CD8-positive, alpha-beta memory T cell (primary cell): ENCODE measurements at regions of chr12 and their contacts with region 1.

Region 1: DNA sequence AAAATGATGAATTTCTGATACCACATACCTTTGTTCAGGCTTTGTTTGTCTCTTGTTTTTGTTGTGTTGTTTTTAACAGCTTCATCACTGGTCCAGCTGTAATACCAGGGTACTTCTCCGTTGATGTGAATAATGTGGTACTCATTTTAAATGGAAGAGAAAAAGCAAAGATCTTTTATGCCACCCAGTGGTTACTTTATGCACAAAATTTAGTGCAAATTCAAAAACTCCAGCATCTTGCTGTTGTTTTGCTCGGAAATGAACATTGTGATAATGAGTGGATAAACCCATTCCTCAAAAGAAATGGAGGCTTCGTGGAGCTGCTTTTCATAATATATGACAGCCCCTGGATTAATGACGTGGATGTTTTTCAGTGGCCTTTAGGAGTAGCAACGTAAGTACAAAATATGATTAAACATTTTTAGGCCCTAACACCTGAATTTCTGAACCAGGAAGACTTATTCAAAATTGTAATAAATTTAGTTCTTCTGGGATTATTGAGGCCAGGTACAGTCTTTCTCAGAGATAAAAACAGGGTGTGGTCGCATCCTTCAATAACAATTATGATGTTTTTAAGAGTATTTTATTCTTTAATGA is 22.4 kb downstream of the RXYLT1 start:
- DNase-seq: peak in 2 of 5 donors; percentile 17 to 21
- H3K4me3 ChIP-seq: no peak overlapping the region
- H3K4me3 Mint-ChIP-seq: no peak overlapping the region
- H3K27ac ChIP-seq: no peak overlapping the region
- H3K27ac Mint-ChIP-seq: no peak overlapping the region
- H3K4me1 ChIP-seq: no peaks in the 10 kb centered on the region
- H3K4me1 Mint-ChIP-seq: no peaks in the 10 kb centered on the region
- H3K27me3 ChIP-seq: no peaks in the 10 kb centered on the region
- H3K27me3 Mint-ChIP-seq: no peaks in the 10 kb centered on the region

Region 2: DNA sequence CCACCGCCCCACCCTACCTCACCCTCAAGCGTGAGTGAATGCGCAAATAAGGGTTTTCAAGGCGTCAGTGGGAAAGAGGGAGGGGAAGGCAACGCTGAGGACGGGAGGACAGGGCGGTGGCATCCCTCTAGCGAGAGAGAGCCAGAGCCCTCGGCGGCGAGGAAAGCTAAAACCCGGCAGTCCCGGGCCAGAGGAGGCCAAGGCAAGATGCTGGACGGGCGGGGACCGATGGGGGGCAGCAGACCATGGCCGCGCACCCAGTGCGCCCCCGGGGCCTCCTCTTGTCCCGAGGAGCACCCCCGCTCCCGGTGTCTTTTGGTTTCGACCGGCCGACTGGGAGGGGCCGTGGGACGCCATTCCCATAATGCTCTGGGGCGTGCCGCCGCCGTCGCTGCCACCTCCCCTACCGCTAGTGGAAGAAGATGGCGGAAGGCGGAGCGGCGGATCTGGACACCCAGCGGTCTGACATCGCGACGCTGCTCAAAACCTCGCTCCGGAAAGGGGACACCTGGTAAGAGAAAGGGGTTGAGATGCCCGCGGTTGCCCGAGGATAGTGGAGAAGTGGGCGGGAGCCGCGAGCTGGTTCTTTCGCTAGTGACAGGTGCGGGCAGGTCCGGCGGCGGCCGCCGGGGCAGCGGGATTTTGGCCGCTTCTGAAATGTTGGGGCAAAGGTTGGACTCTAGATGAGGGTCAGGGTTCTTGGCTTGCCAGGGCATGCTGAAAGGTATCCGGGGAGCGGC is 1541.9 kb before region 1 on chr12 and contains the start of gene USP15:
- CTCF ChIA-PET with region 1: no interaction called
- POLR2A ChIA-PET with region 1: no interaction called
- DNase-seq: peak; percentile 94 to 98 (median 97)
- H3K4me3 ChIP-seq: peak within 1 kb of the TSS; percentile 93
- H3K4me3 Mint-ChIP-seq: peak within 1 kb of the TSS; percentile 98 to 99 (median 99)
- H3K27ac ChIP-seq: peak within 1 kb of the TSS; percentile 94
- H3K27ac Mint-ChIP-seq: peak within 1 kb of the TSS; percentile 94 to 100 (median 99)
- H3K4me1 ChIP-seq: peaks cover 65% of the 10 kb centered on the region
- H3K4me1 Mint-ChIP-seq: peaks cover 57 to 71% (median 59%) of the 10 kb centered on the region in 3 donors
- H3K27me3 ChIP-seq: no peaks in the 10 kb centered on the region
- H3K27me3 Mint-ChIP-seq: peaks cover 0 to 3% of the 10 kb centered on the region in 2 donors
- total RNA-seq, gene USP15: 90.9 to 99.0 TPM

Region 3: GRCh38 chr12:63420206-63420644 is 381.9 kb before region 1 on chr12:
- CTCF ChIA-PET with region 1: interaction called, 16 read pairs
- POLR2A ChIA-PET with region 1: no interaction called
- DNase-seq: peak in 4 of 5 donors; percentile 1 to 47 (median 8)
- H3K4me3 ChIP-seq: no peak overlapping the region
- H3K4me3 Mint-ChIP-seq: no peak overlapping the region
- H3K27ac ChIP-seq: no peak overlapping the region
- H3K27ac Mint-ChIP-seq: no peak overlapping the region
- H3K4me1 ChIP-seq: no peaks in the 10 kb centered on the region
- H3K4me1 Mint-ChIP-seq: no peaks in the 10 kb centered on the region
- H3K27me3 ChIP-seq: no peaks in the 10 kb centered on the region
- H3K27me3 Mint-ChIP-seq: peaks cover 0 to 2% of the 10 kb centered on the region in 2 donors

Region 4: GRCh38 chr12:63779498-63780481 is 22.3 kb before region 1 on chr12 and contains the start of gene RXYLT1:
- CTCF ChIA-PET with region 1: no interaction called
- POLR2A ChIA-PET with region 1: no interaction called
- DNase-seq: peak; percentile 75 to 88 (median 82)
- H3K4me3 ChIP-seq: peak within 1 kb of the TSS; percentile 86
- H3K4me3 Mint-ChIP-seq: peak within 1 kb of the TSS; percentile 93 to 98 (median 95)
- H3K27ac ChIP-seq: peak within 1 kb of the TSS; percentile 84
- H3K27ac Mint-ChIP-seq: peak within 1 kb of the TSS; percentile 93 to 98 (median 97)
- H3K4me1 ChIP-seq: peaks cover 5% of the 10 kb centered on the region
- H3K4me1 Mint-ChIP-seq: peaks cover 26 to 51% (median 50%) of the 10 kb centered on the region in 3 donors
- H3K27me3 ChIP-seq: no peaks in the 10 kb centered on the region
- H3K27me3 Mint-ChIP-seq: peaks cover 0 to 2% of the 10 kb centered on the region in 2 donors
- total RNA-seq, gene RXYLT1: 30.3 to 32.3 TPM

Region 5: GRCh38 chr12:63888908-63889635 is 87.0 kb after region 1 on chr12:
- CTCF ChIA-PET with region 1: no interaction called
- POLR2A ChIA-PET with region 1: no interaction called
- DNase-seq: no peak
- H3K4me3 ChIP-seq: no peak overlapping the region
- H3K4me3 Mint-ChIP-seq: no peak overlapping the region
- H3K27ac ChIP-seq: no peak overlapping the region
- H3K27ac Mint-ChIP-seq: no peak overlapping the region
- H3K4me1 ChIP-seq: no peaks in the 10 kb centered on the region
- H3K4me1 Mint-ChIP-seq: no peaks in the 10 kb centered on the region
- H3K27me3 ChIP-seq: no peaks in the 10 kb centered on the region
- H3K27me3 Mint-ChIP-seq: peaks cover 2 to 24% of the 10 kb centered on the region in 2 donors